Gastrocnemius medialis (tissue), 4 donors: ENCODE measurements at regions of chr1 and their contacts with region 1.

Region 1: GRCh38 chr1:184242507-184242943 is 144.3 kb upstream of the C1orf21 start:
- DNase-seq: peak in 1 of 2 donors; percentile 30
- ATAC-seq: peak; percentile 98 to 99
- H3K4me3 ChIP-seq: no peak overlapping the region
- H3K27ac ChIP-seq: peak overlapping the region in 3 of 4 donors; percentile 45 to 67 (median 49)
- H3K4me1 ChIP-seq: peaks cover 4 to 9% of the 10 kb centered on the region in 2 donors
- H3K27me3 ChIP-seq: no peaks in the 10 kb centered on the region
- CTCF ChIP-seq: peak in 4 of 5 experiments; percentile 13 to 54 (median 31)
- POLR2A ChIP-seq: no peak

Region 2: GRCh38 chr1:184563308-184563707 is 320.8 kb after region 1 on chr1:
- in situ Hi-C with region 1: loop called in 1 of 4 experiments (anchors 10 kb)
- intact Hi-C with region 1: loop called (anchors 5 kb)
- DNase-seq: no peak
- ATAC-seq: no peak
- H3K4me3 ChIP-seq: no peak overlapping the region
- H3K27ac ChIP-seq: peak overlapping the region; percentile 91 to 97 (median 95)
- H3K4me1 ChIP-seq: peaks cover 33 to 42% of the 10 kb centered on the region in 2 donors
- H3K27me3 ChIP-seq: no peaks in the 10 kb centered on the region
- CTCF ChIP-seq: peak; percentile 31 to 62 (median 45)
- POLR2A ChIP-seq: no peak

Region 3: DNA sequence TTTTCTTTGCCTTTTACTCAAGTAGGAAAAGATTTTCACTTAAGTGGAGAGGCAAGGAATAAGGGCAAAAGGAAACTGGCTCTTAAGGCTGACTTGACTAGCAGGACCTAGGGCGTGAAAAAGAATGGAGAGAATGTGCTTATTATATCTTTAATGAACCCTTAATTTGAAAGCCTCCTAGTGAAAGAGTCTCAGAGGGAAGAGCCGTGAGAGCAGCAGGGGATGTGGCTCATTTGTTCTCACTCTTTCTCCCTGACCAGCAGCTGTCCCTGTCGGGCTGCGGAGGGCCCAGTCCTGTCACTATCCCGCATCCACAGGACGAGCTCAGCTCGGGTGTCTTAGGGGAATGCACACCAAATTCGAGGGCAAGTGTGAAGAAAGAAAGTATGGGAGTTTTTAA is 332.1 kb after region 1 on chr1:
- in situ Hi-C with region 1: loop called in 2 of 4 experiments (anchors 10 kb)
- intact Hi-C with region 1: no loop called
- DNase-seq: peak in 1 of 2 donors; percentile 48
- ATAC-seq: no peak
- H3K4me3 ChIP-seq: no peak overlapping the region
- H3K27ac ChIP-seq: peak overlapping the region; percentile 64 to 87 (median 78)
- H3K4me1 ChIP-seq: peaks cover 40 to 47% of the 10 kb centered on the region in 2 donors
- H3K27me3 ChIP-seq: no peaks in the 10 kb centered on the region
- CTCF ChIP-seq: no peak
- POLR2A ChIP-seq: no peak

Region 4: DNA sequence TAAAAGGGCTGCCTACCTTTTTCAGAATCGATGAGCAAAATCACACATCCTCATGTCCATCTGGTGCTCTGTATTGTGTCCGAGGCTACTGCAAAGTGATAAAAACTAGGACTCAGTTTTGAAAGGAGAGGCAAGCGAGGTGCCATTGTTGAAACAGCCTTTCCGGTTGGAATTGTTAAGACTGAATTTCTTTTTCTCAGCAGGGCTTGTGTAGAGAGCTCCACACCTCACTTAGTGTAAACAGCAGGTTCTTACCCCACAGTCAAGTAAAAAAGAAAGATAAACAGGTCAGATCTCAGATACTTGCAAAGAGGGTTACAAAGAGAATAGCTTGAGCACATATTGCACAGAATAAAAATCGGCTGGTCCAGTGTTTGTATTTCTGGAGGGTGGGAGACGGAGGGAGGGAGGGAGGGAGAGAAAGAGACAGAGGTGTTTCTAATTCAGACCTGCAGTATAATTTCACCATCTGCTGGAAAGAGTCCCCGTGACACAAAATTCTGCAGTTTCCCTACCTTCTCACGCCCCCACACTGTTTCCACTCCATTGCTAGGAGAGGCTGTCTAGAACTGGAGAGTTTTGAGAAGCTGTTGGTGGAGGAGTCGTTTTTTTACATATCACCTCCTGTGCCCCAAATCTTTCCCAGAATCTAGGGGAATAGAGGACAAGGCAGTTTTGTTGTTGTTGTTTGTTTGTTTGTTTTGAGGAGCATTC is 429.6 kb after region 1 on chr1:
- in situ Hi-C with region 1: loop called (anchors 5 to 10 kb)
- intact Hi-C with region 1: no loop called
- DNase-seq: no peak
- ATAC-seq: no peak
- H3K4me3 ChIP-seq: no peak overlapping the region
- H3K27ac ChIP-seq: no peak overlapping the region
- H3K4me1 ChIP-seq: no peaks in the 10 kb centered on the region
- H3K27me3 ChIP-seq: no peaks in the 10 kb centered on the region
- CTCF ChIP-seq: no peak
- POLR2A ChIP-seq: no peak

Region 5: GRCh38 chr1:184691719-184692324 is 449.3 kb after region 1 on chr1:
- in situ Hi-C with region 1: no loop called
- intact Hi-C with region 1: loop called (anchors 5 kb)
- DNase-seq: no peak
- ATAC-seq: peak; percentile 59 to 73
- H3K4me3 ChIP-seq: no peak overlapping the region
- H3K27ac ChIP-seq: no peak overlapping the region
- H3K4me1 ChIP-seq: no peaks in the 10 kb centered on the region
- H3K27me3 ChIP-seq: no peaks in the 10 kb centered on the region
- CTCF ChIP-seq: peak; percentile 50 to 86 (median 76)
- POLR2A ChIP-seq: no peak